ENCODE measurements at regions of chr1 and their contacts with region 1.

Region 1: GRCh38 chr1:15106608-15107007 is 46.9 kb upstream of the TMEM51 start:
- DNase-seq: no peak
- ATAC-seq: no peak
- H3K4me3 Mint-ChIP-seq: no peak overlapping the region
- H3K27ac Mint-ChIP-seq: no peak overlapping the region
- H3K4me1 Mint-ChIP-seq: peaks cover 26% of the 10 kb centered on the region
- H3K27me3 Mint-ChIP-seq: peaks cover 8% of the 10 kb centered on the region
- CTCF ChIP-seq: no peak

Region 2: GRCh38 chr1:14826172-14826636 is 280.4 kb before region 1 on chr1:
- CTCF ChIA-PET with region 1: no interaction called
- POLR2A ChIA-PET with region 1: no interaction called
- DNase-seq: no peak
- ATAC-seq: no peak
- H3K4me3 Mint-ChIP-seq: no peak overlapping the region
- H3K27ac Mint-ChIP-seq: no peak overlapping the region
- H3K4me1 Mint-ChIP-seq: peaks cover 12% of the 10 kb centered on the region
- H3K27me3 Mint-ChIP-seq: no peaks in the 10 kb centered on the region
- CTCF ChIP-seq: no peak

Region 3: GRCh38 chr1:15304701-15305467 is 198.3 kb after region 1 on chr1:
- CTCF ChIA-PET with region 1: interaction called, 13 read pairs
- POLR2A ChIA-PET with region 1: interaction called, 3 read pairs
- DNase-seq: peak; percentile 87
- ATAC-seq: peak; percentile 90
- H3K4me3 Mint-ChIP-seq: no peak overlapping the region
- H3K27ac Mint-ChIP-seq: no peak overlapping the region
- H3K4me1 Mint-ChIP-seq: no peaks in the 10 kb centered on the region
- H3K27me3 Mint-ChIP-seq: peaks cover 12% of the 10 kb centered on the region
- CTCF ChIP-seq: peak; percentile 92

Measured in WTC11 (cell line).